Mammary epithelial cell (primary cell): ENCODE measurements at regions of chr9 and their contacts with region 1.

Region 1: GRCh38 chr9:77673941-77674791 is 26.0 kb upstream of the GNA14 start:
- DNase-seq: no peak
- H3K4me3 ChIP-seq: no peak overlapping the region
- H3K27ac ChIP-seq: no peak overlapping the region
- H3K4me1 ChIP-seq: no peaks in the 10 kb centered on the region
- H3K27me3 ChIP-seq: peaks cover 1% of the 10 kb centered on the region
- CTCF ChIP-seq: no peak

Region 2: DNA sequence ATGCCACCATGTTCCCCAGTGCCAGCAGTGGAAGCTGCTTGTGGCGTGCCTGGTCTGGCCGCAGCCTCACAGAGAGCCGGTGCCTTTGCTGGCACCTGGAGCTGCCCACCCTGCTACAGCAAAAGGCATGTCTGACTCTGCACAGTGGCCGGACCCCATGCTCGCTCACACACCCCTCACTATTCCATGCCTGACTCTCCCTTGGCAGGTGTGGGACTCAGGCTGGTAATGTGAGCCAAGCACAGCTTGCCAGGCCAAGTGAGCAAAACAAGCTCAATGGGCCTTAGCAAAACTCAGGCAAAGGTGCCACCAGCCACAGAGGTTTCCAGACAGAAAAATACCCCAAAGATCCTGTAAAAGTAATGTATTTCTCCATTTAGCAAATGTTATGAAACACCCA is 41.5 kb before region 1 on chr9:
- CTCF ChIA-PET with region 1: no interaction called
- dilution Hi-C with region 1: no loop called
- in situ Hi-C with region 1: no loop called
- intact Hi-C with region 1: no loop called
- DNase-seq: no peak
- H3K4me3 ChIP-seq: no peak overlapping the region
- H3K27ac ChIP-seq: no peak overlapping the region
- H3K4me1 ChIP-seq: no peaks in the 10 kb centered on the region
- H3K27me3 ChIP-seq: peaks cover 3% of the 10 kb centered on the region
- CTCF ChIP-seq: no peak

Region 3: DNA sequence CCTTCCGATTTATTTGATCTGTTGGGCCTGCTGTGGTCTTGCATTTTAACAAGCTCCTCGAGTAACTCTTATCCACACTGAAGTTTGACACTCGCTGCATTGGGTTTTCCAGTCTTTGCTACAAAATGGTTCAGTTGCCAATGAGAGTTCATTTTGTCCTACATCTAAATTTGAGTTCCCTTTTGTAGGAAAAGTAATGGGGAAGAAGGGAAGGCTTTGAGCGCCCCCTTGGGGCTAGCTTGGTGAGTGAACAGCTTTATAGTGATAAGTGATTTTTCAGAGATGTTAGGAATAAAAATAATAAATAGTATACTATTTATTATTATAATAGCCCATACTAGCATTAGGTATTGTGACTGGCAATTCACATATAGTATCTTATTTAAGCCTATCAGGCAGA is 447.3 kb after region 1 on chr9:
- CTCF ChIA-PET with region 1: no interaction called
- dilution Hi-C with region 1: no loop called
- in situ Hi-C with region 1: no loop called
- intact Hi-C with region 1: loop called (anchors 10 kb)
- DNase-seq: peak; percentile 54
- H3K4me3 ChIP-seq: no peak overlapping the region
- H3K27ac ChIP-seq: no peak overlapping the region
- H3K4me1 ChIP-seq: peaks cover 28% of the 10 kb centered on the region
- H3K27me3 ChIP-seq: no peaks in the 10 kb centered on the region
- CTCF ChIP-seq: peak; percentile 80